Endothelial cell of umbilical vein (primary cell): ENCODE measurements at regions of chr20 and their contacts with region 1.

Region 1: GRCh38 chr20:3710703-3711483 is 1.5 kb downstream of the SIGLEC1 start:
- DNase-seq: peak; percentile 58
- H3K4me3 ChIP-seq: no peak overlapping the region
- H3K27ac ChIP-seq: no peak overlapping the region
- H3K4me1 ChIP-seq: no peaks in the 10 kb centered on the region
- H3K27me3 ChIP-seq: no peaks in the 10 kb centered on the region
- CTCF ChIP-seq: peak; percentile 91 to 97
- POLR2A ChIP-seq: no peak

Region 2: DNA sequence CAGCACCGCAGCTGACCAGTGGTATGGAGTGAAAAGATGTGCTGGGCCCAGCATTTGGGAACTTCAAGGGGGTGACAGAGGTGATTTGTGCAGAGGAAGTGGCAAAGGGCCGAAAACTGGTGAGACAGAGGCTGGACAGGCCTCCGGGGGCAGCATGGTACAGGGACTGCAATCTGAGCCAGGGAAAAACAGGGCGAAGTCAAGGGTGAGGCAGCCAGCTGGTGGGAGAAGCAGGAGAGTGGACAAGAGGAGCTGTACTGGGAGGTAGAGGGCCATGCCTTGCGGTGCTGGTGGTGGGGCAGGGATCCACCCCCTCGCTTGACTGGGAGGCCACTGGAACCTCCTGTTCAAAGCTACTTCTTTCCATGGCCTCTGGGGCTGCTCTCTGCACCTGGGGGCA is 40.4 kb before region 1 on chr20:
- CTCF ChIA-PET with region 1: interaction called, 346 read pairs
- POLR2A ChIA-PET with region 1: no interaction called
- dilution Hi-C with region 1: no loop called
- intact Hi-C with region 1: no loop called
- DNase-seq: no peak
- H3K4me3 ChIP-seq: no peak overlapping the region
- H3K27ac ChIP-seq: no peak overlapping the region
- H3K4me1 ChIP-seq: no peaks in the 10 kb centered on the region
- H3K27me3 ChIP-seq: peaks cover 25 to 34% of the 10 kb centered on the region in 2 experiments
- CTCF ChIP-seq: no peak
- POLR2A ChIP-seq: no peak

Region 3: GRCh38 chr20:3686867-3687321 is 24.0 kb before region 1 on chr20:
- CTCF ChIA-PET with region 1: interaction called, 346 read pairs
- POLR2A ChIA-PET with region 1: interaction called, 8 read pairs
- dilution Hi-C with region 1: no loop called
- intact Hi-C with region 1: no loop called
- DNase-seq: no peak
- H3K4me3 ChIP-seq: no peak overlapping the region
- H3K27ac ChIP-seq: no peak overlapping the region
- H3K4me1 ChIP-seq: no peaks in the 10 kb centered on the region
- H3K27me3 ChIP-seq: peaks cover 22 to 28% of the 10 kb centered on the region in 2 experiments
- CTCF ChIP-seq: no peak
- POLR2A ChIP-seq: no peak

Region 4: DNA sequence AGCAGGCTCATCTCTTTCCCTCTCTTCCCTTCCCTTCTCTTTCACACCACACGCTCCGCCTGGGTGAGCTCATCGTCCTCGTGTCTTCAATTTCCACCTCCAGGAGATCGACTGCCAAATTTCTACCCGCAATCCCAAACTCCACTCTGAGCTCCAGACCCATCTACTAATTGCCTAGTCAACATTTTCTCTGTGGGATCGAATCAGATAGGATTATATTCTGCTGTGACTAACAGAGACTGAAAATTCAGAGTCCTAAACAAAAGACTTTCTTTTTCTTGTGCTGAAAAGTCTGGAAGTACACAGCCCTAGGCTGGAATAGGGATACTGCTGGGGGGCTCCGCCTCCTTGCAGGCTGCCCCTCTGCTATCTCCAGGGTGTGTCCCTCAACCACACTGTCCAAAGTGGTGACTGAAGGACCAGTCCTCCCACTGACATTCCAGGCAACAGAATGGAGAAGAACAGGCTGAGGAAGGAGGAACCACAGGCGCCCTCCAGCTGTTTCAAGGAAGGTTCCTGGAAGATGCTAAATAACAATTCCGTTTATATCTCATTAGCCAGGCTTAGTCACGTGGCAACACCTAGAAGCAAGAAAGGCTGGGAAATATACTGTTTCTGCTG is 16.6 kb after region 1 on chr20:
- CTCF ChIA-PET with region 1: interaction called, 40 read pairs
- POLR2A ChIA-PET with region 1: no interaction called
- dilution Hi-C with region 1: no loop called
- intact Hi-C with region 1: no loop called
- DNase-seq: no peak
- H3K4me3 ChIP-seq: no peak overlapping the region
- H3K27ac ChIP-seq: no peak overlapping the region
- H3K4me1 ChIP-seq: no peaks in the 10 kb centered on the region
- H3K27me3 ChIP-seq: peaks cover 7 to 10% of the 10 kb centered on the region in 2 experiments
- CTCF ChIP-seq: no peak
- POLR2A ChIP-seq: no peak

Region 5: GRCh38 chr20:3767427-3768341 is 56.8 kb after region 1 on chr20 and contains the start of gene ADISSP:
- CTCF ChIA-PET with region 1: interaction called, 52 read pairs
- POLR2A ChIA-PET with region 1: no interaction called
- dilution Hi-C with region 1: no loop called
- intact Hi-C with region 1: loop called (anchors 1 kb)
- DNase-seq: peak; percentile 98
- H3K4me3 ChIP-seq: peak within 1 kb of the TSS; percentile 61 to 71 (median 61)
- H3K27ac ChIP-seq: peak within 1 kb of the TSS; percentile 55
- H3K4me1 ChIP-seq: peaks cover 25% of the 10 kb centered on the region
- H3K27me3 ChIP-seq: no peaks in the 10 kb centered on the region
- CTCF ChIP-seq: no peak
- POLR2A ChIP-seq: peak; percentile 72
- total RNA-seq, gene ADISSP: 55.0 and 55.8 TPM in 2 replicates